Ovary (tissue), 10 donors: ENCODE measurements at regions of chr19 and their contacts with region 1.

Region 1: GRCh38 chr19:49937750-49938381 is 8.6 kb upstream of the NUP62 start:
- DNase-seq: peak; percentile 81 to 91 (median 90)
- H3K4me3 ChIP-seq: no peak overlapping the region
- H3K27ac ChIP-seq: peak overlapping the region; percentile 31 to 40
- H3K4me1 ChIP-seq: peaks cover 9% of the 10 kb centered on the region
- H3K27me3 ChIP-seq: no peaks in the 10 kb centered on the region
- CTCF ChIP-seq: peak; percentile 95 to 98 (median 97)
- EP300 ChIP-seq: no peak
- POLR2A ChIP-seq: no peak

Region 2: DNA sequence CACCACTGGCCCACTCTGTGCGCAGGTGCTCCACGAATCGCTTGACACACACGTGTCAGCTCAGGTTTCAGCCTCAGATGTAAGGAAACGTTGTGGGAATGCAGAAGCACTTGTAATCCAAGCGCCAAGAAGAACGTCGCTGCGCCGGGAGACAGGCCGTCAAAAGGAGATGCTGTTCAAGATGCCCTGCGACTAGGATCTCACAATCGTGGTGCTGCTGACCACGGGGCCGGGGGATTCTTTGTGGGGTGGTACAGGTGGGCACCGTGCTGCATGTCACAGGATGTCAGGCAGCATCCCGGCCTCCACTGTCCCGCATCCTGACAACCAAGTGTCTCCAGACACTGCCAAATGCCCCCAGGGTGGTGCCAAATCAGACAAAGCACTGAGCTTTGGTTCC is 40.0 kb after region 1 on chr19:
- intact Hi-C with region 1: loop called (anchors 2 to 5 kb)
- DNase-seq: peak in 1 of 5 donors; percentile 43
- H3K4me3 ChIP-seq: no peak overlapping the region
- H3K27ac ChIP-seq: peak overlapping the region in 1 of 2 donors; percentile 21
- H3K4me1 ChIP-seq: peaks cover 22% of the 10 kb centered on the region
- H3K27me3 ChIP-seq: no peaks in the 10 kb centered on the region
- CTCF ChIP-seq: no peak
- EP300 ChIP-seq: no peak
- POLR2A ChIP-seq: no peak

Region 3: GRCh38 chr19:49983645-49984229 is 45.9 kb after region 1 on chr19:
- intact Hi-C with region 1: loop called (anchors 2 to 5 kb)
- DNase-seq: peak; percentile 66 to 85 (median 79)
- H3K4me3 ChIP-seq: no peak overlapping the region
- H3K27ac ChIP-seq: no peak overlapping the region
- H3K4me1 ChIP-seq: peaks cover 10% of the 10 kb centered on the region
- H3K27me3 ChIP-seq: no peaks in the 10 kb centered on the region
- CTCF ChIP-seq: peak; percentile 76 to 94 (median 94)
- EP300 ChIP-seq: no peak
- POLR2A ChIP-seq: no peak

Region 4: GRCh38 chr19:50050384-50051224 is 112.7 kb after region 1 on chr19:
- intact Hi-C with region 1: no loop called
- DNase-seq: peak; percentile 59 to 71 (median 70)
- H3K4me3 ChIP-seq: peak overlapping the region; percentile 6
- H3K27ac ChIP-seq: no peak overlapping the region
- H3K4me1 ChIP-seq: no peaks in the 10 kb centered on the region
- H3K27me3 ChIP-seq: no peaks in the 10 kb centered on the region
- CTCF ChIP-seq: no peak
- EP300 ChIP-seq: no peak
- POLR2A ChIP-seq: no peak